Endothelial cell of umbilical vein (primary cell): ENCODE measurements at regions of chr2 and their contacts with region 1.

Region 1: GRCh38 chr2:210189452-210190143 is 18.4 kb upstream of the KANSL1L start:
- DNase-seq: no peak
- H3K4me3 ChIP-seq: no peak overlapping the region
- H3K27ac ChIP-seq: no peak overlapping the region
- H3K4me1 ChIP-seq: no peaks in the 10 kb centered on the region
- H3K27me3 ChIP-seq: no peaks in the 10 kb centered on the region
- CTCF ChIP-seq: no peak
- POLR2A ChIP-seq: no peak

Region 2: GRCh38 chr2:209719034-209719433 is 470.6 kb before region 1 on chr2:
- CTCF ChIA-PET with region 1: no interaction called
- POLR2A ChIA-PET with region 1: no interaction called
- dilution Hi-C with region 1: no loop called
- intact Hi-C with region 1: loop called (anchors 10 kb)
- DNase-seq: no peak
- H3K4me3 ChIP-seq: no peak overlapping the region
- H3K27ac ChIP-seq: no peak overlapping the region
- H3K4me1 ChIP-seq: no peaks in the 10 kb centered on the region
- H3K27me3 ChIP-seq: no peaks in the 10 kb centered on the region
- CTCF ChIP-seq: no peak
- POLR2A ChIP-seq: no peak

Region 3: DNA sequence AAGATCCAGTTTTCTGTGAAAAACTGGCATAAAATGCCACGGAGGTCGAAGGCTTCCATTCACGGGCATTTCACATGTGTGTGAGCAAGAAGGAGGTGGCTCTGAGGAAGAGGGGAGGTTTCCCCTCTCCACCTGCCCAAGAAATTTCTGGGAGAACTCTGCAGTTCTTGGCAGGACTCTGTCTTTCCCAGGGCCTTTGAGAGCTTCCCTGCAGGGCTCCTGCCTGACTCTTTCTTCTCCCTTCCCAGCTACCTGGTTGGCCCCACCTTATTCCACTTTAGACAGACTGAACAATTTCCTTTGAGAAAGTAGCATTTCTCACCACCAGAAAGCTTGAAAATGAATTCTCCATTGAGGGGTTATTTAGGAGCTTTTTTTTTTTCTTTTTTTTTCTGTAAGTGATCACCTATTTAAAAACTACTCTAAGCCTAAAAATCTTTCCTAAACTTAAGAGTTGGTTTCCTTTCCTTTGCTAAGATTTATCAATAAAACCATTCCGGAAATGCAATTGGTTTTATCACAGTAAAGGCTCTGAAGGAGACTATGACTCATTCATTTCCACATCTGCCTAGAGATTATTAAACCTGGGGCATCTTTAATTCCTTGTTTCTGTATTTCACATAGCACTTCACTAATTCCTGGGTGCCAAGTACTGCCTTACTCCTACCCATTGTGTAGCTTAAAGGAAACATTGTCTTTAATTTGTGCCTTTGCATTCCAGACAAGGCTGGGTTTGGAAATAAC is 358.7 kb before region 1 on chr2:
- CTCF ChIA-PET with region 1: no interaction called
- POLR2A ChIA-PET with region 1: no interaction called
- dilution Hi-C with region 1: no loop called
- intact Hi-C with region 1: no loop called
- DNase-seq: no peak
- H3K4me3 ChIP-seq: no peak overlapping the region
- H3K27ac ChIP-seq: no peak overlapping the region
- H3K4me1 ChIP-seq: no peaks in the 10 kb centered on the region
- H3K27me3 ChIP-seq: no peaks in the 10 kb centered on the region
- CTCF ChIP-seq: no peak
- POLR2A ChIP-seq: no peak